GM10248 (cell line): ENCODE measurements at regions of chr10 and their contacts with region 1.

Region 1: GRCh38 chr10:58967551-58968388 is 208.7 kb upstream of the PHYHIPL start:
- DNase-seq: peak; percentile 18
- CTCF ChIP-seq: no peak

Region 2: GRCh38 chr10:58833771-58834561 is 133.8 kb before region 1 on chr10:
- CTCF ChIA-PET with region 1: no interaction called
- POLR2A ChIA-PET with region 1: no interaction called
- DNase-seq: no peak
- CTCF ChIP-seq: no peak

Region 3: DNA sequence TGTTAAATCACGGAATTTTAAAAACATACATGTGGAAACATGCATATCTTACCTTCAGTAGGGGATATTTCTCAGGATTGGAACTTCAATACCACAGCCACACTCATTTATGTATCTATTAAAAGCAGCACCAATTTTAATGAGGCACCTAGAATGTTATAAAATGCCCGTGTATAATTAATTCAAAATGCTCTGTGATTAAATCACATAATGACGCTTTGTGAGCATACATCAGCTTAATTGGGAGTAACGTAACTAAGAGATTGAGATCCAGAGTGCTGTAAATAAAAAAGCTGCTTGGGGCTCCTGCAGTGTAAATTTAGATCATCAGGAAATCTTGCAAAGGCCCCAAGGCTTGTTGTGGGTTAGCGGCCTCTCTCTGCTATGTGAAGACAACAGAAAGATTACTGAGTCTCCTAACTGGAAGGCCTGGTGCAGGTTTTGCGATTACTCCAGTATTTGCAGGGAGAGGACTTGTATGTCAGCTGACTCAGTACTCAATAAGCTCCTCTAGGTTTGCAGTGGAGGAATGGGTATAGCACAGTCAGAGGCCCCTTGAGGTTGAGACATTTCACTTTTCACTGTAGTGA is 13.2 kb after region 1 on chr10:
- CTCF ChIA-PET with region 1: interaction called, 13 read pairs
- POLR2A ChIA-PET with region 1: no interaction called
- DNase-seq: no peak
- CTCF ChIP-seq: no peak